ENCODE measurements at regions of chr5 and their contacts with region 1.

Region 1: DNA sequence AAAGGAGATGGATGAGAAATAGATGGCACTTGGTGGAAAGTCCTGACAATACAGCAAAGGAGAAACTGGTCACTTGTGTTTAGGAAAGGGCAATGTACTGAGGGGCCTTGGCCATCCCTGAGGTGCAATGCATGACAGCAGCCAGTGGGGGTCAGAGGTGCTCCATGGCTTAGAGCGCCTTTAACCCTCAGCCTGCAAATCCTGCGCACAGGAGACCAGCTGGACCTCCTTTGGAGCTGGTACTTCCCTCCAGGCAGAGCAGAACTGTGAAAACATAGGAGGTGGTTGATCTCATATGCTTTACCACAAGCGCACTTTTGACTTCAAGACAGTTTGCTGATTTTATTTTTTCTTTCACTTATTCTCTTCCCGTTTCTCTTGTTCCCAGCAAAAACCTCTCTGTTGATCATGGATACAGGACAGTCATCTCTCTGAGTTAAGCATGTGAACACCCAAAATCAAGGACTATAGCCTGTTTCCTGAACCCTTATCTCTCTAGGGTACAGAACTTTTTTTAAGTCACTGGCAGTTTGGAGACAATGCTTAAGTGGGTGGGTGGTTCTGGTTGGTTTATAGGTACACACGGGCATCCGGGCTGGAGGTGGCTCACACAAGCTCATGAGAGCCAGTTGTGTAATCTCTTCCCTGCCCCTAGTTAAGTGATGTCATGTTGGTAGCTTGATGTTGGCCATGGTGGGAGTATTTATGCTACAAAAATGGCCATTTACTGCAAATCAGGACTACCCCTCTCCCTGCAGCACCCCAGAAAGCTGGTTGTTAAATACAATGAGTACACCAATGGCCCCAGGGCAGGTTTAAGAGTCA is 37.6 kb upstream of the ANKRD55 start:
- DNase-seq: peak; percentile 87
- ATAC-seq: peak; percentile 97
- H3K4me3 Mint-ChIP-seq: no peak overlapping the region
- H3K27ac Mint-ChIP-seq: peak overlapping the region; percentile 81
- H3K4me1 Mint-ChIP-seq: peaks cover 19% of the 10 kb centered on the region
- H3K27me3 Mint-ChIP-seq: no peaks in the 10 kb centered on the region

Region 2: DNA sequence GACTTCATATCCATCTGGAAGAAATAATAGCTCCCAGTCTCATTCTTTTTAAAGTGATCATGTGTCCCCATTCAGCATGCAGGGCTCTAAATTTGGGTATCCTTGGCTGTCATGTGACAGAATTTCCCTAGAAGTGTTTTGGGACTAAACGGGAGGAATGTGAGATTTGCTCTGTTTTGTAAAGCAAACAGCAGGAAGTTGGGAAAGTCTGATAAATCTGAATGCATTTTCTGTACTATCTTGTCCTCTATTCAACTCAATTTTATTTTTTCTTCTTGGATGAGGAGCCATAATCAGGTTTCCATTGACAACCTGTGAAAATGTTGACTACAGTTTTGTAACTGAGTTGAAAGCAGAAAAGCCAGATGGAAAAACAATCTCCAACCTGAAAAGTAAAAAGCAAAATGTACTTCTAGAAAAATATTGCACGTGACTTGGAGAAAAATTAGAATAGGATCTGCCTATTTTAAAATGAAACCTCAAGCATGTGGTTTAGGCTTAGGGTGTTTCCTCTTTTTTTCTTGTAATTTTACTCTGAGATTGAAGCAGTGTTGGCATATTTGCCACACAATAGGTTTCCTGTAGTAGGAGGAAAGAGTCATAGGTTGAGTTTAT is 199.8 kb before region 1 on chr5:
- CTCF ChIA-PET with region 1: no interaction called
- POLR2A ChIA-PET with region 1: no interaction called
- intact Hi-C with region 1: no loop called
- DNase-seq: no peak
- ATAC-seq: peak; percentile 65
- H3K4me3 Mint-ChIP-seq: no peak overlapping the region
- H3K27ac Mint-ChIP-seq: peak overlapping the region; percentile 64
- H3K4me1 Mint-ChIP-seq: peaks cover 75% of the 10 kb centered on the region
- H3K27me3 Mint-ChIP-seq: no peaks in the 10 kb centered on the region

Region 3: DNA sequence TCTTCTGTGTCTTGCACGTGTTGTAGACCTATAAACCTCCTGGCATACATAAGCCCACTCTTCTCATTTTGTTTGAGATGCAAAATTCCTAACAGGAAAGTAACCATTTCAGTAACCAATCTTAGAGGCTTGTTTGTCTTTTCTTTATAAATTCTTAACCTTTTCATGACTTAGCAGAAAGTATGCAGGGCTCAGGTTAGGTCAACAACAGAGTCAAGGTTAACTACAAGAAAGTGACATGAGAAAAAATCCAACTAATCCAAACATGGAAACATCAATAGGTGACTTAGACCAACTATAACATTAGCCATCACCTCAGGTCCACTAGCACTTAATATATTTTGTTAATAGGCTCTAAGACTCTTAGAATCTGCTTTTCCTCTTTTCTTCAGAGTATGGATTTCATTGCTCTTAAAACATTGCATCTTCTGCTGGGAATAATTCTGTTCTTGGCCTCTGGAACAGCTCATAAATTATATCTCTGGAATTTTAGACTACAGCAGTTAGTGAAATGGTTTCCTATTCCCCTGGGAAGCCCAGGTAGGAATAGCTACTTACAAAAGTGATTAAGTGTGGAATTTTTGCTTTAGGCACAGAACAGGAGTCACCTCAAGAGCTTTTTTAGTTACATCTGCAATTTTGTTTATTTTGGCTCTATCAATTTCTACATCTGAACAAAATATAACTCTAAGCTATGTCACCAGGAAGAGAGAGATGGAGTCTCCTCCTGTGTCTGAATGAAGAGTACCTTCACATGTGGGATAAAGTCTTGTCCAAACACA is 117.6 kb after region 1 on chr5:
- CTCF ChIA-PET with region 1: interaction called, 5 read pairs
- POLR2A ChIA-PET with region 1: no interaction called
- intact Hi-C with region 1: loop called in 1 of 2 experiments (anchors 1 kb)
- DNase-seq: no peak
- ATAC-seq: no peak
- H3K4me3 Mint-ChIP-seq: no peak overlapping the region
- H3K27ac Mint-ChIP-seq: no peak overlapping the region
- H3K4me1 Mint-ChIP-seq: peaks cover 3% of the 10 kb centered on the region
- H3K27me3 Mint-ChIP-seq: no peaks in the 10 kb centered on the region

Region 4: DNA sequence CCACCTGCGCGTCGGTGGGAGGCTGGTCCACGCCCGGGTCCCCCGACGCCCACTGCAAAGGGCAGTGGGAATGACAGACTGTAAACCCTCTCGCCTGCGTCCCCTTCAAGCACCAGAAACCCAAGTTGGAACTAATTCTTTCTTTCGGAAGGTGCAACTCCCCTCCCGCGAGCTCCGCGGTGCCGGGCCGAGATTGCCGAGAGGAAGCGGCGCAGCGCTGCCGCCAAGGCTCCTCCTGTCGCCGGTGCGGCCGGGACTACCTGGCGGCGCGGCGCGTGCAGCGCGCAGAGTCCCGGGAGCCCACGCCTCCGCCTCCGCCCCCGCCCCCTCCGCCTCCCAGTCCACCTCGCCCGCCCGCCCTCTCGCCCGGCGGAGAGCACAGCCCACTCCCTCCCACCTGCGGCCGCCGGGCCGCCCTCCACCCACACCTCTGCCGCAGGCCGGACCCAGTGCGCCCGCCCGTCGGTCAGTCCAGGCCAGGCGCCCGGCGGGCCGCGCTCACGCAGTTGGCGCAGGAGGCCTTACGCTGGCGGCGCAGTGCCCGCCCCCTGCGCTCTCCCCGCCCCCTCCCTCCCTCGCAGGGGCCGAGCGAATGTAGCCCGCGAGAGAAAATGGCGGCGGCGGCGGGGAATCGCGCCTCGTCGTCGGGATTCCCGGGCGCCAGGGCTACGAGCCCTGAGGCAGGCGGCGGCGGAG is 544.3 kb after region 1 on chr5 and contains the start of gene MAP3K1:
- CTCF ChIA-PET with region 1: no interaction called
- POLR2A ChIA-PET with region 1: no interaction called
- intact Hi-C with region 1: loop called (anchors 1 to 2 kb)
- DNase-seq: peak; percentile 86
- ATAC-seq: peak; percentile 57
- H3K4me3 Mint-ChIP-seq: peak within 1 kb of the TSS; percentile 76
- H3K27ac Mint-ChIP-seq: peak within 1 kb of the TSS; percentile 87
- H3K4me1 Mint-ChIP-seq: peaks cover 33% of the 10 kb centered on the region
- H3K27me3 Mint-ChIP-seq: no peaks in the 10 kb centered on the region
- total RNA-seq, gene MAP3K1: 22.3 to 22.9 TPM

Region 5: DNA sequence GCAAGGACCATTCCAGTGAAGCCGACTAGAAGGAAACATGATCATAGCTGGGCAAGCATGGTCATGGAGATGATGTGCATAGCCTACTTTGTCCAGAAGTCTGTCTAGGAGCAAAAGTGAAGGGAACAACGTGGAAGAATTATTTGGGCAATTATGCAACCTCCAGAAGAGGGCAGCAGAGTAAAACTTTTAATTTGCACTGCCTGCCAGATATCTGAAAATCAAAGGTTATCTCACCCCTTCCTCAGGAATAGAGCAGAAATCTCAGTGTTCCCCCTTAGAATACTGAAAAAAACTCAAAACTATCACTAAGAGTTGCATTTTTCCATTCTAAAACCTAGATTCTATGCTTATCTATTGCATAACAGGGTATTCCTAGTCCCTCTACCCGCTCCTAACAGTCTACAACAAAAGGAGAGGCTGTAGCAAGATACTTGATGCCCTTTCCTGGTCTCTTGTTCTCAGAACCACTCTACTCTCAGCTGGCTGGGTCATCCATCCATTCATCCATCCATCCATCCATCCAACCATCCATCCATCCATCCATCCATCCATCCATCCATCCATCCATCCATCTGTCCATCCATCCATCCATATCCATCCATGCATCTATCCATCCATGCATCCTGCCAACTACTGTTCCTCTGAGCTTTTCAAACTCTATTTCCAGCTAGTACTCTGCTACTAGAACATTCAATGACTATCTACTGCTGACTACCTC is 630.2 kb after region 1 on chr5:
- CTCF ChIA-PET with region 1: no interaction called
- POLR2A ChIA-PET with region 1: no interaction called
- intact Hi-C with region 1: loop called (anchors 1 to 2 kb)
- DNase-seq: peak; percentile 36
- ATAC-seq: peak; percentile 54
- H3K4me3 Mint-ChIP-seq: no peak overlapping the region
- H3K27ac Mint-ChIP-seq: no peak overlapping the region
- H3K4me1 Mint-ChIP-seq: peaks cover 5% of the 10 kb centered on the region
- H3K27me3 Mint-ChIP-seq: no peaks in the 10 kb centered on the region

Region 6: GRCh38 chr5:57137401-57137800 is 866.6 kb after region 1 on chr5:
- CTCF ChIA-PET with region 1: interaction called, 3 read pairs
- POLR2A ChIA-PET with region 1: no interaction called
- intact Hi-C with region 1: loop called (anchors 1 to 5 kb)
- DNase-seq: no peak
- ATAC-seq: no peak
- H3K4me3 Mint-ChIP-seq: no peak overlapping the region
- H3K27ac Mint-ChIP-seq: no peak overlapping the region
- H3K4me1 Mint-ChIP-seq: no peaks in the 10 kb centered on the region
- H3K27me3 Mint-ChIP-seq: no peaks in the 10 kb centered on the region

Region 7: GRCh38 chr5:57277085-57277484 is 1006.3 kb after region 1 on chr5:
- CTCF ChIA-PET with region 1: no interaction called
- POLR2A ChIA-PET with region 1: no interaction called
- intact Hi-C with region 1: loop called in 1 of 2 experiments (anchors 5 kb)
- DNase-seq: no peak
- ATAC-seq: no peak
- H3K4me3 Mint-ChIP-seq: no peak overlapping the region
- H3K27ac Mint-ChIP-seq: no peak overlapping the region
- H3K4me1 Mint-ChIP-seq: no peaks in the 10 kb centered on the region
- H3K27me3 Mint-ChIP-seq: peaks cover 3% of the 10 kb centered on the region

Region 8: GRCh38 chr5:57577432-57578175 is 1306.8 kb after region 1 on chr5:
- CTCF ChIA-PET with region 1: no interaction called
- POLR2A ChIA-PET with region 1: no interaction called
- intact Hi-C with region 1: no loop called
- DNase-seq: no peak
- ATAC-seq: no peak
- H3K4me3 Mint-ChIP-seq: no peak overlapping the region
- H3K27ac Mint-ChIP-seq: no peak overlapping the region
- H3K4me1 Mint-ChIP-seq: no peaks in the 10 kb centered on the region
- H3K27me3 Mint-ChIP-seq: peaks cover 8% of the 10 kb centered on the region

Measured in activated CD4-positive, alpha-beta T cell treated with anti-CD3 and anti-CD28 coated beads for 36 hours (primary cell).